CD4-positive, alpha-beta memory T cell (primary cell): ENCODE measurements at regions of chr4 and their contacts with region 1.

Region 1: GRCh38 chr4:16205298-16206164 is 20.7 kb downstream of the TAPT1 start:
- DNase-seq: peak in 3 of 5 donors; percentile 21 to 40 (median 29)
- H3K4me3 ChIP-seq: no peak overlapping the region
- H3K4me3 Mint-ChIP-seq: peak overlapping the region in 1 of 8 donors; percentile 1
- H3K27ac ChIP-seq: no peak overlapping the region
- H3K27ac Mint-ChIP-seq: peak overlapping the region in 4 of 7 donors; percentile 18 to 77 (median 40)
- H3K4me1 ChIP-seq: peaks cover 17% of the 10 kb centered on the region
- H3K4me1 Mint-ChIP-seq: peaks cover 24 to 47% (median 37%) of the 10 kb centered on the region in 4 donors
- H3K27me3 ChIP-seq: no peaks in the 10 kb centered on the region
- H3K27me3 Mint-ChIP-seq: no peaks in the 10 kb centered on the region

Region 2: DNA sequence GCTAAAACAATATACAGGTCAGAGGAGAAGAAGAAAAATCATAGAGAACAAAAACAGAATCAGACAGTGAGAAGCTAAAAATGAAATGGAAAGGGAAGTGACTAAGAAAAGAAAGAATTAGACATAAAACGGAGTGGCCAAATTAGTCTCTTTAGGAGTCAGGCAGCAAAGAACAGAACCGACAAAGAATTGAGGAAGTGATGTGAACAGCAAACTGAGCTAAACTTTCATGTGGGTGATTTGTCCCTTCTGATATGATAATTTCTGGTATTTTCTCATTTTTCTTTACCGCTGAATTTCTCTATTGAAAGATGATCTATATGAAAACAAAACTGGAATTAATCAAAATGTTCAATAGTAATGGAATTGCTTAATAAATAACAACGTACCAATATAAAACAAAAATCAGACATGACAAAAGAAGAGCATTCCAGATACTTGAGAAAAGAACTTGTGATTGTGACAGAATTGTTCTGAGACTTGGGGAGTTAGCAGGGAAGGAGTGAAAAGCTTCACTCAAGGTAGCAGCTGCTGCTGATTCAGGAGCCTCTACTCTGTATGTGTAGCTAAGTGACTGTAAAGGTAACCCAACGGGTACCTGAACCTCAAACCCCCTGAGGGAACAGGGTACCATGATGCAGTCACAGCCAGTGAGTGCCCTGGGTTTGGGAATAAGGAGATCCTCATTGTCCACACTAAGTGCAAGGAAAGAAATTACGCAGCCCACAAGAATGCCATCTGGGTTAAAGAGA is 11.9 kb after region 1 on chr4:
- CTCF ChIA-PET with region 1: interaction called, 32 read pairs
- POLR2A ChIA-PET with region 1: interaction called, 3 read pairs
- intact Hi-C with region 1: no loop called
- DNase-seq: no peak
- H3K4me3 ChIP-seq: no peak overlapping the region
- H3K4me3 Mint-ChIP-seq: peak overlapping the region in 7 of 8 donors; percentile 7 to 69 (median 39)
- H3K27ac ChIP-seq: no peak overlapping the region
- H3K27ac Mint-ChIP-seq: peak overlapping the region in 6 of 7 donors; percentile 1 to 60 (median 21)
- H3K4me1 ChIP-seq: peaks cover 66% of the 10 kb centered on the region
- H3K4me1 Mint-ChIP-seq: peaks cover 51 to 76% (median 65%) of the 10 kb centered on the region in 4 donors
- H3K27me3 ChIP-seq: no peaks in the 10 kb centered on the region
- H3K27me3 Mint-ChIP-seq: no peaks in the 10 kb centered on the region

Region 3: DNA sequence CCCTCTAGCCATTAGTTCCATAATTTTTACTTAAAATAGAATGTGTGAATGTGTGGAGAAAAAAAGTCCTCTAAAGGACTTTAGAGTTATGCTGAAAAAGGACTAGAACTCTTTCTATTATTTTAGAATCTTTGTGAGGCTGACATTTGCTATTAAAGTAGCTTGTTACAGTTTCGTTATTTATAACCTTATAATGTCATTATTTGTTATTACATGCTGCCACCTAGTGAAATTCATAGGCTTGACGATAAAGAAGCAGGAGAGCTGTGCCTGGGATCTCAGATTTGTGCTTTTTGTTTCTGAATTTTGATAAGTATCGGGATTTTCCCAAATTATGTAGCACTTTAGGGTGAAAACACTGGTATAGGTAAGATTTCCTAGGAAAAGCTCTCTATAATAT is 59.3 kb after region 1 on chr4:
- CTCF ChIA-PET with region 1: interaction called, 5 read pairs
- POLR2A ChIA-PET with region 1: no interaction called
- intact Hi-C with region 1: loop called (anchors 10 kb)
- DNase-seq: peak in 4 of 5 donors; percentile 35 to 47 (median 39)
- H3K4me3 ChIP-seq: no peak overlapping the region
- H3K4me3 Mint-ChIP-seq: no peak overlapping the region
- H3K27ac ChIP-seq: no peak overlapping the region
- H3K27ac Mint-ChIP-seq: no peak overlapping the region
- H3K4me1 ChIP-seq: peaks cover 6% of the 10 kb centered on the region
- H3K4me1 Mint-ChIP-seq: peaks cover 7 to 10% (median 9%) of the 10 kb centered on the region in 4 donors
- H3K27me3 ChIP-seq: no peaks in the 10 kb centered on the region
- H3K27me3 Mint-ChIP-seq: no peaks in the 10 kb centered on the region